ENCODE measurements at regions of chr20 and their contacts with region 1.

Region 1: GRCh38 chr20:36461600-36462439 is 79.5 kb upstream of the MYL9 start:
- DNase-seq: peak; percentile 63
- ATAC-seq: no peak
- H3K4me3 Mint-ChIP-seq: peak overlapping the region; percentile 95
- H3K27ac Mint-ChIP-seq: peak overlapping the region; percentile 89
- H3K4me1 Mint-ChIP-seq: peaks cover 41% of the 10 kb centered on the region
- H3K27me3 Mint-ChIP-seq: no peaks in the 10 kb centered on the region

Region 2: GRCh38 chr20:36472637-36473081 is 10.8 kb after region 1 on chr20:
- POLR2A ChIA-PET with region 1: interaction called, 14 read pairs
- DNase-seq: peak; percentile 64
- ATAC-seq: peak; percentile 94
- H3K4me3 Mint-ChIP-seq: peak overlapping the region; percentile 80
- H3K27ac Mint-ChIP-seq: peak overlapping the region; percentile 89
- H3K4me1 Mint-ChIP-seq: peaks cover 36% of the 10 kb centered on the region
- H3K27me3 Mint-ChIP-seq: no peaks in the 10 kb centered on the region